WTC11 (cell line): ENCODE measurements at regions of chr2 and their contacts with region 1.

Region 1: GRCh38 chr2:72953976-72954375 is 36.7 kb downstream of the EMX1 start:
- DNase-seq: no peak
- ATAC-seq: no peak
- H3K4me3 Mint-ChIP-seq: no peak overlapping the region
- H3K27ac Mint-ChIP-seq: no peak overlapping the region
- H3K4me1 Mint-ChIP-seq: peaks cover 51% of the 10 kb centered on the region
- H3K27me3 Mint-ChIP-seq: no peaks in the 10 kb centered on the region
- CTCF ChIP-seq: no peak

Region 2: GRCh38 chr2:72757177-72757775 is 196.7 kb before region 1 on chr2:
- CTCF ChIA-PET with region 1: no interaction called
- POLR2A ChIA-PET with region 1: no interaction called
- DNase-seq: no peak
- ATAC-seq: no peak
- H3K4me3 Mint-ChIP-seq: no peak overlapping the region
- H3K27ac Mint-ChIP-seq: no peak overlapping the region
- H3K4me1 Mint-ChIP-seq: peaks cover 13% of the 10 kb centered on the region
- H3K27me3 Mint-ChIP-seq: no peaks in the 10 kb centered on the region
- CTCF ChIP-seq: no peak

Region 3: DNA sequence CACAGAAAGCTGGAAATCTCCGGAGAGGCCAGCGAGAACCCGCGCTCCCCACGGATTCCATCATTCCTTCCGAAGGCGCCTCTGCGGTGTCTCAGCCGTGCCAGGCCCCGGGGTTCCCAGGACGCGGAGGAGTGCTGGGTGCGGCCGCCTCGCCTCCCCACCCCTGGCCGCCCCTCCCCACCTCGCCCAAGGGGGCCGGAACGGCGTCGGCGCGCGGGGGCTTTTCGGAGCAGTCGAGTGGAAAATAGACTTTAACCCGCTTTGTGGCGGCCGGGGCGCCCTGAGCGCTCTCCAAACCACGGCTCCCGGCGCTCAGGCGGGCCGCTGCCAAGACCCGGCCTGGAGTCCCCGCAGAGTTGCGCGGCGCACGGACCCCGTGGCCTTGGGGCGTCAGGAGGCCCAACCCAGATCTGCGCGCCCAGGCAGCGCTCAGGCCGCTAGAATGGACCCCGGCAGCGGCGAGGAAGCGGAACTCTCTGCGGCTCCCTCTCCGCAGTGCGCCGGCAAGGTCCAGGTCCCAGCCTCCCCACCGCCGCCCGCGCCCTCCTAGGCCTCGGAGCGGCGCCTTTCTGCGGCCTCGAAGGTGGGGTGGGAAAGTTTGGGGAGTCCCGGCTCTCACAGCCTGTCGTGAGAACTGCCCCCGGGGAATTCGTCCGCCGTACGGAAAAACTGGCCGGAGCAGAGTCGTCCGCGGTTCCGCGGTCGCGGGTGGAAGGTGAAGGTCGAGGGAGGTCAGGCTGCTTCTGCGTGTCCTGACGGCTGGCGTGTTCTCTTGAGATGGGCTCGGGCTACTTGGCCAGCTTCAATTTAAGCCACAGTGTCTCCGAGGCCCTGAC is 37.9 kb before region 1 on chr2:
- CTCF ChIA-PET with region 1: interaction called, 27 read pairs
- POLR2A ChIA-PET with region 1: interaction called, 15 read pairs
- DNase-seq: peak; percentile 84
- ATAC-seq: peak; percentile 32
- H3K4me3 Mint-ChIP-seq: peak overlapping the region; percentile 84
- H3K27ac Mint-ChIP-seq: no peak overlapping the region
- H3K4me1 Mint-ChIP-seq: peaks cover 43% of the 10 kb centered on the region
- H3K27me3 Mint-ChIP-seq: peaks cover 61% of the 10 kb centered on the region
- CTCF ChIP-seq: no peak

Region 4: DNA sequence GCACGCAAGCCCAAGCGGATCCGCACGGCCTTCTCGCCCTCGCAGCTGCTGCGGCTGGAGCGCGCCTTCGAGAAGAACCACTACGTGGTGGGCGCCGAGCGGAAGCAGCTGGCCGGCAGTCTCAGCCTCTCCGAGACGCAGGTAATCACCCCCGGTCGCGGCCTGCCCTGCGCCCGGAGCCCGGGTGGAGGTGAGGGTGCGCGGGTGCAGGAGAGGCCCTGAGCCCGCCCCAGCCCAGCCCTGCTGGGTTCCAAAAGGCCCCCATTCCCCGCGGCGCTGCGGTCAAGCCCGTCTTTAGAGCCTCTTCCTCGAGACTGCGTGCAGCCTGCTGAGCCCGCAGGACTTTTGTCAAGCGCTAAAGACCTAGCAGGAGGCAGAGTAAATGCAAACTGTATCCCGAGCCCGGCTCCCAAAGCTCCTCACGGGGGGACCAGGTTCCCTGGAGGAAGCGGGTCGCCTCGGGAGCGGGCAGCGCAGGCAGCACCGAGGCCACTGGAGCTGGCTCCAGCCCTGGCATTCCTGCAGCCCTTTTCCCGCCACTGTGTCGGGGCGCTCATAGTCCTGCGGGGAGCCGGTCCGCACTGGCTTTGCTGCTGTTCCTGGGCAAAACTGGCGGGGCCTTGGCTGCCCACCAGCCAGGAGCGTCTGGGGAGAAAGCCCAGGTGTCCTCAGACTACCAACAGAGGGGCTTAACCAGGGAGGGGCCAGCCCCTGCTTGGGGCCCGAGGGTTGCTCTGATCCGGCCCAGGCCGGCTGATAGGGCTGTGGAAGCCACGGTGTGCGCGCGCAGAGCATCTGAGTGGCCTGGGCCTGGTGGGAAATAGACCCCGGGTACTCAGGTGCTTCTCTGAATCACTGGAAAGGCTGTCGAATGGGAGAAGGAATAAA is 29.4 kb before region 1 on chr2:
- CTCF ChIA-PET with region 1: interaction called, 23 read pairs
- POLR2A ChIA-PET with region 1: interaction called, 4 read pairs
- DNase-seq: peak; percentile 58
- ATAC-seq: peak; percentile 14
- H3K4me3 Mint-ChIP-seq: peak overlapping the region; percentile 72
- H3K27ac Mint-ChIP-seq: no peak overlapping the region
- H3K4me1 Mint-ChIP-seq: peaks cover 28% of the 10 kb centered on the region
- H3K27me3 Mint-ChIP-seq: no peaks in the 10 kb centered on the region
- CTCF ChIP-seq: no peak

Region 5: DNA sequence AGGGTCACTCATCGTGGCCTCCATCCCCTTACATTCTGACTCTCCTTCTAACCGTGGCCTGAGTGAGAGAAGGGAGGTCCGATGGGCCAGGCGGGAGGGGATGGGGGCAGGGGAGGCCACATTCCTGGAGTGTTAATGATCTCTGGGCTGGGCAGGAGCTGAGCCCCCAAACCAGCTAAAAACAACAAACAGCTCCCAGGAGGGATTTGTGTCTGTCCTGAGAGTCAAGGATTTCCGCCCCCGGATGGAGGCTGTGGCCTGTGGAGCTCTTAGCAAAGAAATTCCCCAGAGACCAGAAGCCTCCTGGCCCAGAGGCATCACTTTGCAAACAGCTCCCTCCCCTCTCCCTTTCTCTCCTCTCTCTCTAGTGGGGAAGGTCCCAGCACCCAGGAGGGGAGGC is 13.2 kb before region 1 on chr2:
- CTCF ChIA-PET with region 1: interaction called, 50 read pairs
- POLR2A ChIA-PET with region 1: interaction called, 7 read pairs
- DNase-seq: peak; percentile 30
- ATAC-seq: peak; percentile 46
- H3K4me3 Mint-ChIP-seq: no peak overlapping the region
- H3K27ac Mint-ChIP-seq: peak overlapping the region; percentile 63
- H3K4me1 Mint-ChIP-seq: peaks cover 48% of the 10 kb centered on the region
- H3K27me3 Mint-ChIP-seq: peaks cover 25% of the 10 kb centered on the region
- CTCF ChIP-seq: no peak